Colonic mucosa (tissue), 4 donors: ENCODE measurements at regions of chr9 and their contacts with region 1.

Region 1: DNA sequence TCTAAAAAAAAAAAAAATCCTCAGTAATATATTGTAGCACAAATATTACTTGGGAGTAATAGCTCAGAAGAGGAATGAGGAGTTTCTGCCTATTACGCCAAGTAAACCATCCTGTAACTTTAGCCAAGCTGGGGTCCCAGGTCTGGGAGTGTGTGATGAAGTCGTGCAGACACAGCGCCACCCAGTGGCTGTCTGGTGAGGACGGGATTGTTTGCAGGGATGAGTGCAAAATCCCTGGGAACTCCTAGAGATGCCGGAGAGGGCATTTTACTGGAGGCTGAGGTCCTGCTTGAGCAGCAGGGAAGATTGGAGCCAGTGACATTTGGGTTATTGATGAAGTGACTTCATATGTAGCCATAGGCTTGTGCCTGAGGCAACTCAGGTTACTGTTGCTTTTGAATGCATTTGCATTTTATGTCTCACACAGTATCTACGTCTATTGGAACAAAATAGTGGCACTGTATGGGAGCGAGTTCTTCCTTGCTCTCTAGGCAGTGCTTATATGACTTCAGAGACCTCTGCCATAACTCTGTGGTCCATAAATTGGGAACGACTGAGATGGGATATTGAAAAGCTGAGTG is 72.8 kb downstream of the PSAT1 start:
- DNase-seq: peak; percentile 65
- H3K4me3 ChIP-seq: no peak overlapping the region
- H3K27ac ChIP-seq: no peak overlapping the region
- H3K4me1 ChIP-seq: no peaks in the 10 kb centered on the region
- H3K27me3 ChIP-seq: peaks cover 7% of the 10 kb centered on the region
- CTCF ChIP-seq: peak; percentile 83

Region 2: GRCh38 chr9:78261403-78262001 is 108.2 kb before region 1 on chr9:
- intact Hi-C with region 1: loop called (anchors 2 kb)
- DNase-seq: no peak
- H3K4me3 ChIP-seq: no peak overlapping the region
- H3K27ac ChIP-seq: no peak overlapping the region
- H3K4me1 ChIP-seq: no peaks in the 10 kb centered on the region
- H3K27me3 ChIP-seq: no peaks in the 10 kb centered on the region
- CTCF ChIP-seq: peak; percentile 63

Region 3: DNA sequence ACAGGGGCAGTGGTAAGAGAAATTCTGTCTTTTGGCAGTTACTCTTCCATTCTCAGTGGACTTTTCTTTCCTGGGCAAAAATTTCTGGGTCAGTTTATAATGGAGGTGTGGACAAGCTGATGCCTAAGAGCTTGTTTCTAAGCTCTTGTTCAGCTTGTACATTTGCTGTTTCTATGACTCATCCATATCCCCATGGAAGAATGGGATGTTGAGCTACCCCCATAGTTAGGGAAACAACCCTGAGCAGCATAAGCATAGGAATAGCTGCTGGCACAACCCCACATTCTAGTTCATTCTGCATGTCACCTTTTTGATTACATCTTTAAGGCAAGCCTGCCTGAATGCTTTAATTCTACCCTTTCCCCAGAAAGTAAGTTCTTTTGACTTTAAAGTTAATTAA is 100.5 kb after region 1 on chr9:
- intact Hi-C with region 1: no loop called
- DNase-seq: no peak
- H3K4me3 ChIP-seq: no peak overlapping the region
- H3K27ac ChIP-seq: no peak overlapping the region
- H3K4me1 ChIP-seq: no peaks in the 10 kb centered on the region
- H3K27me3 ChIP-seq: no peaks in the 10 kb centered on the region
- CTCF ChIP-seq: no peak

Region 4: GRCh38 chr9:78805771-78806170 is 436.0 kb after region 1 on chr9:
- intact Hi-C with region 1: no loop called
- DNase-seq: no peak
- H3K4me3 ChIP-seq: no peak overlapping the region
- H3K27ac ChIP-seq: no peak overlapping the region
- H3K4me1 ChIP-seq: no peaks in the 10 kb centered on the region
- H3K27me3 ChIP-seq: no peaks in the 10 kb centered on the region
- CTCF ChIP-seq: no peak